ENCODE measurements at regions of chr15 and their contacts with region 1.

Region 1: GRCh38 chr15:65264863-65265430 is 21.7 kb downstream of the PARP16 start:
- DNase-seq: no peak
- ATAC-seq: peak; percentile 27

Region 2: DNA sequence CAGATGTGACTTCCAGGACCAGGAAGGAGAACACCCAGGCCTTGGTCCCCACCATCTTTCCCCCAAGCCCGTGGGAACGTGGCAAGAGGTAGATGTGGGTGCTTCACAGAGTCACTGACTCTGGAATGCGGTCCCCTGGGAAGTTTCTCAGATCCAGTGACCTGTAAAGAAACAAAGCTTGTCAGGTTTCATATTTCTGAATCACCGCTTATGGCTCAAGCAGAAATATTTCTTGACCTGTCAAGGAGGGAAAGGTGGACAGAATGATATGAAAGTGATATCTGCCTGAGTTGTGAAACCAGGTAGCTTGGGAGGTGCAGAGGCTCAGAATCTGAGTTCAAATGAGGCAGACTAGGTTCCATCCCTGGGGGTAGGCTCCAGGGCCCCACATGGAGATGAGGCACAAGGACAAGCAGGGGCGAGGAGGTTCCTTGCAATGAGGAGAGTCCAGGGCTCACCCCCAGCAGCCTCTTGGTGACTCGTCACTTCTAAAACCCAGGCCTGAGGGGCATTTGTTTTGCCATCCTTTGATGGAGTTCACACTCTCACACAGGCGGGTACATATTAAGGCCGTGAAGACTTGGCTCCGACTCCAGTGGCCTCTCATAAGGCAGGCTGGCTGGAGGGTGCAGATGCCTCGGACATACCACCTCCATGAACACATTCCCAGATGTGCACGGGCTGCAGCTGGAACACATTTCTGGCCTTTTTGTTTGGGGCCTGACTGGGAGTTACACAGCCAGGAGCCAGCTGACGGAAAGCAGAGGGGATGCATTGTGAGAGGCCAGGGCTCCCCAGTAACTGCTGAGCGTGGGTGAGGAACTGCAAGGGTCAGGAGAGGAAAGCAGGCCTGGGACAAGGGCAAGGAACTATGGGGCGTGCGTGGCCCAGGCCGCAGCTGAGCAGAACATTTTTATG is 55.0 kb before region 1 on chr15:
- intact Hi-C with region 1: loop called (anchors 10 kb)
- DNase-seq: no peak
- ATAC-seq: peak; percentile 72

Region 3: GRCh38 chr15:65326117-65326526 is 61.2 kb after region 1 on chr15:
- intact Hi-C with region 1: no loop called
- DNase-seq: no peak
- ATAC-seq: peak; percentile 20